Naive thymus-derived CD8-positive, alpha-beta T cell (primary cell): ENCODE measurements at regions of chr6 and their contacts with region 1.

Region 1: GRCh38 chr6:26020329-26021000 is 57.9 kb downstream of the TRIM38 start:
- DNase-seq: peak; percentile 64 to 94 (median 86)
- ATAC-seq: peak; percentile 50 to 57
- H3K4me3 Mint-ChIP-seq: peak overlapping the region; percentile 85 to 100 (median 97)
- H3K27ac Mint-ChIP-seq: peak overlapping the region; percentile 93 to 100 (median 100)
- H3K4me1 Mint-ChIP-seq: peaks cover 8 to 36% (median 25%) of the 10 kb centered on the region in 4 donors
- H3K27me3 Mint-ChIP-seq: no peaks in the 10 kb centered on the region

Region 2: DNA sequence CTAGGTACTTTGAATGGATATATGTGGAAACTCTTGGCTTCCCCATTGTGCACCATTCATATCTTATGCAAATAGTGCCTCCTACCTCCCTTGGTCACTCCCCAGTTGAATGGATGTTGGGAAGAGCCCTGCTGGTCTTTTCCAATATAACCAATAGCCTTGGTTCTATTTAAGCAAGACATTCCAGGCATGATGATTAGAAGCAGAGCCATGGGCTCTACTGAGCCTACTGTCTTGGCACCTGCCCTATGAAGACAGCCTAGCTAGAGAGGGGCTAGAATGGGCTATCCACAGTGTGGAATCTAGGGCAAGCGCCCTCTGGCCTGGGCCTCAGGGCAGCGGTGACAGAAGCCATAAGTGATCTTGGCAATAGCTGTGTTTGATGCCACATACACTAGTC is 204.2 kb before region 1 on chr6:
- POLR2A ChIA-PET with region 1: interaction called, 11 read pairs
- DNase-seq: no peak
- ATAC-seq: no peak
- H3K4me3 Mint-ChIP-seq: no peak overlapping the region
- H3K27ac Mint-ChIP-seq: no peak overlapping the region
- H3K4me1 Mint-ChIP-seq: no peaks in the 10 kb centered on the region
- H3K27me3 Mint-ChIP-seq: peaks cover 7 to 45% (median 20%) of the 10 kb centered on the region in 5 donors

Region 3: GRCh38 chr6:26241033-26241895 is 220.8 kb after region 1 on chr6:
- POLR2A ChIA-PET with region 1: no interaction called
- DNase-seq: peak in 8 of 10 donors; percentile 19 to 78 (median 54)
- ATAC-seq: peak; percentile 15 to 22
- H3K4me3 Mint-ChIP-seq: peak overlapping the region; percentile 82 to 95 (median 88)
- H3K27ac Mint-ChIP-seq: peak overlapping the region; percentile 92 to 99 (median 98)
- H3K4me1 Mint-ChIP-seq: peaks cover 9 to 19% (median 18%) of the 10 kb centered on the region in 4 donors
- H3K27me3 Mint-ChIP-seq: no peaks in the 10 kb centered on the region